CD8-positive, alpha-beta T cell (primary cell): ENCODE measurements at regions of chr4 and their contacts with region 1.

Region 1: DNA sequence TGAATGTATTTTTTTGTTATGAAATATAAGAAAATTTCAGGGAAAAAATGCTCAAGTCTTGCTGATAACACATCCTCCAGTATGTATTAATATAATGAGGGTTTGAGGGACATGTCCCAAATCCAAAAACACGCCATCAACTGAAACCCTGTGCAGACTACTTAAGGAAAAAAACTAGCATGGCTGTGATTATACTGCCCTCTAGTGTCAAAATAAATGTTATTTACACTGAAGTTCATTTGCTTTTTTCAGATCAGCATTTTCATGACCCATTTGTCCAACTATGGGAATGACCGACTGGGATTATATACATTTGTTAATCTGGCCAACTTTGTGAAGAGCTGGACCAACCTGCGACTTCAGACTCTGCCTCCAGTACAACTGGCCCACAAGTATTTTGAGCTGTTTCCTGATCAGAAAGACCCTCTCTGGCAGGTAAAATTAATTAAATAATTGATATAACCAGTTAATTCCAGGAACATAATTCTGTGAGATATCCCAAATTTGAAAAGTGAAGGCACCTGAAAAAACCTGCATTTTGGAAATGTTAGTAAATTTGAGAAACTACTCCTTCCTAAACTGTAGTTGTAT is 128.5 kb downstream of the PRSS12 start:
- DNase-seq: peak in 2 of 9 experiments; percentile 24 to 42
- ATAC-seq: no peak
- H3K4me3 ChIP-seq: no peak overlapping the region
- H3K4me3 Mint-ChIP-seq: no peak overlapping the region
- H3K27ac ChIP-seq: no peak overlapping the region
- H3K27ac Mint-ChIP-seq: no peak overlapping the region
- H3K4me1 ChIP-seq: no peaks in the 10 kb centered on the region
- H3K4me1 Mint-ChIP-seq: no peaks in the 10 kb centered on the region
- H3K27me3 ChIP-seq: no peaks in the 10 kb centered on the region
- H3K27me3 Mint-ChIP-seq: peaks cover 3% of the 10 kb centered on the region
- CTCF ChIP-seq: peak; percentile 84

Region 2: GRCh38 chr4:118235566-118236120 is 11.3 kb after region 1 on chr4:
- CTCF ChIA-PET with region 1: interaction called, 12 read pairs
- POLR2A ChIA-PET with region 1: no interaction called
- intact Hi-C with region 1: no loop called
- DNase-seq: no peak
- ATAC-seq: no peak
- H3K4me3 ChIP-seq: no peak overlapping the region
- H3K4me3 Mint-ChIP-seq: no peak overlapping the region
- H3K27ac ChIP-seq: no peak overlapping the region
- H3K27ac Mint-ChIP-seq: no peak overlapping the region
- H3K4me1 ChIP-seq: no peaks in the 10 kb centered on the region
- H3K4me1 Mint-ChIP-seq: no peaks in the 10 kb centered on the region
- H3K27me3 ChIP-seq: no peaks in the 10 kb centered on the region
- H3K27me3 Mint-ChIP-seq: peaks cover 2% of the 10 kb centered on the region
- CTCF ChIP-seq: no peak

Region 3: GRCh38 chr4:118289794-118290193 is 65.5 kb after region 1 on chr4:
- CTCF ChIA-PET with region 1: no interaction called
- POLR2A ChIA-PET with region 1: no interaction called
- intact Hi-C with region 1: no loop called
- DNase-seq: no peak
- ATAC-seq: no peak
- H3K4me3 ChIP-seq: no peak overlapping the region
- H3K4me3 Mint-ChIP-seq: no peak overlapping the region
- H3K27ac ChIP-seq: no peak overlapping the region
- H3K27ac Mint-ChIP-seq: no peak overlapping the region
- H3K4me1 ChIP-seq: no peaks in the 10 kb centered on the region
- H3K4me1 Mint-ChIP-seq: no peaks in the 10 kb centered on the region
- H3K27me3 ChIP-seq: no peaks in the 10 kb centered on the region
- H3K27me3 Mint-ChIP-seq: no peaks in the 10 kb centered on the region
- CTCF ChIP-seq: no peak